ENCODE measurements at regions of chr2 and their contacts with region 1.

Region 1: DNA sequence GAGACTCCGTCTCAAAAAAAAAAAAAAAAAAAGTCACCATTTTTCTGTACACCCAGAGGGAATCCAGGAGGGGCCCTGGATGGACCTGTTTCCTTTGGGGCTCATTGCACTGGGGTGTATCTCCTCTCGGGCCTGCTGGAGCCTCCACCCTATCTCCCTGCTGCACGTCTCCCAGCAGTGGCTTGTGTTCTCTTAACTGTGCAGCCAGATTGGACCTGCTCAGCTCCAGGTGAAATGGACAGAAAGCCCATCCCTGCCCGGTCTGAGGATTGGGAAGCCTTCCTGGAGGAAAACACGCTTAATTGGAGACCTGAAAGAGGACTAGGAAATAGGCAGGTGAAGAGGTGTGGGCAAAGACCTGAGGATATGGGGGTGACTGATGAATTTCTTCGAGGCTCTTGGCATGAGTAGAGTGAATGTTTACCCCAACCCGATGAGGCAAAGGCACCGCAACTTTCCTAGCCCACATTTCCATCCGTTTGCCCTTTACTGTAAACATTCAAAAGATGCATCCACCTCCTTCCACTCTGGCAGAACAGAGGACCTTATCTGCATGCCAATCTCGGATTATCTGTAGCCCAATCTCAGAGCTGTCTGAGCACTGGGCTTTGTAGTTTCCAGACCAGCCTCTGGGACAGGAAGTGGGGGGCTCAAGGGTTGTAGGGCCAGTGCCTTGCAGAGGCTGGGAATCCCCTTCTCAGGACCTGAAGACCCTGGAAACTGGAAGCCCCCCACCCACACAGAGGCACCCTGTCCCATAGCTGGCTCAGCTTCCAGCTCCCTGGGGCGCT is 2.6 kb upstream of the ZAP70 start:
- DNase-seq: no peak
- ATAC-seq: no peak
- H3K4me3 Mint-ChIP-seq: no peak overlapping the region
- H3K27ac Mint-ChIP-seq: no peak overlapping the region
- H3K4me1 Mint-ChIP-seq: peaks cover 12% of the 10 kb centered on the region
- H3K27me3 Mint-ChIP-seq: peaks cover 9% of the 10 kb centered on the region
- CTCF ChIP-seq: no peak

Region 2: DNA sequence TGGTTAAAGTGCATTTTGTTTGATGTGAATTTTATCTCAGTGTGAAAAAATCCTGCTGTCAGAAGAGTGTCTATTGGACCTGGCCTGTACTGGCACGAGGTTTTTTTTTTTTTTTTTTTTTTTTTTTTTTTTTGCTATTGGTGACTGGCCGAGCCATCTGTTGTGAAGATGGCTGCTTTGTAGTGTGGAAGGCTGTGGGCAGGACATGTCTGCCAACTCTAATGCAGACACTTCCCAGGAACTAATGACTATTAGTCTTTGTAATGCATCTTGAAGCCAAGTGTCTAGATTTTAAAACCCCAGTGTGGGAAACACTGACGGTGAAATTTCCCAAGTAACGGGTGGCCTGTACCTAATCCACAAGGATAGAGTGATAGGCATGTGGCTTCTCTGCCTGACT is 36.9 kb after region 1 on chr2:
- CTCF ChIA-PET with region 1: no interaction called
- POLR2A ChIA-PET with region 1: interaction called, 4 read pairs
- intact Hi-C with region 1: loop called (anchors 2 kb)
- DNase-seq: no peak
- ATAC-seq: no peak
- H3K4me3 Mint-ChIP-seq: no peak overlapping the region
- H3K27ac Mint-ChIP-seq: no peak overlapping the region
- H3K4me1 Mint-ChIP-seq: peaks cover 41% of the 10 kb centered on the region
- H3K27me3 Mint-ChIP-seq: no peaks in the 10 kb centered on the region
- CTCF ChIP-seq: no peak

Region 3: DNA sequence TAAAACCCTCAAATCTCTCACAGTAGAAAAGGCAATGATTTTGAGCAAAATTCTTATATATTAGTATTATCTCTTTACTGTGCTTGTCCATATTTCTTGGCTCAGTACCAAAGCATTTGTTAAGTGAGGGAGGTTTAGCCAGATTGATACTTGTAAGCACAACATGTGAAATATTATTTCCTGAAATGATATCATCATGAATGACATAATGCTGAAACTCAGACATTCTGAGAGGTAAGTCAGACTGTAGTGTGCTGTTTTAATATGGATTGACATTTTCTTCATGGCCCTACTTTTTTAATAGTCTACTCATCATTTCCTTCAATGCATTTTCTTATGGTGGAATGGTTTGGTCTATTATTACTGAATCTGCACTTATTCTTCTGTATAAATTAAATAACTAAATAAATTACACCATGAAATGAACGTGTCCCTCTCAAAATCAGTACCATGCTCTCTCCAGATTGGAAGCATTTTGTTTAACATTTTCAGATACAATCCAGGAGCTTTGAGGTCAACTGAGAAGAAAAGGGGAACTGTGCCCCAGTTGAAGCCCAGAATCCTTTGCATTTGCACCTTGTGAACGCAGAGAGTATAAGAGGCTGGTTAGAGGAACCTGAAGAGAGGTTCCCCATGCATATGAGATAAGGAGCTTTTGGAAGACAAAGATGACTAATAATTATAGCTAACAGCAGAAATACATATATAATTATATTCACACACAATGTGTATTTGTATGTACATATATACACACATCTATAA is 1275.3 kb after region 1 on chr2:
- CTCF ChIA-PET with region 1: no interaction called
- POLR2A ChIA-PET with region 1: no interaction called
- intact Hi-C with region 1: no loop called
- DNase-seq: no peak
- ATAC-seq: no peak
- H3K4me3 Mint-ChIP-seq: no peak overlapping the region
- H3K27ac Mint-ChIP-seq: no peak overlapping the region
- H3K4me1 Mint-ChIP-seq: no peaks in the 10 kb centered on the region
- H3K27me3 Mint-ChIP-seq: peaks cover 3% of the 10 kb centered on the region
- CTCF ChIP-seq: no peak